Right ventricle myocardium inferior (tissue), 1 donor: ENCODE measurements at regions of chr2 and their contacts with region 1.

Region 1: DNA sequence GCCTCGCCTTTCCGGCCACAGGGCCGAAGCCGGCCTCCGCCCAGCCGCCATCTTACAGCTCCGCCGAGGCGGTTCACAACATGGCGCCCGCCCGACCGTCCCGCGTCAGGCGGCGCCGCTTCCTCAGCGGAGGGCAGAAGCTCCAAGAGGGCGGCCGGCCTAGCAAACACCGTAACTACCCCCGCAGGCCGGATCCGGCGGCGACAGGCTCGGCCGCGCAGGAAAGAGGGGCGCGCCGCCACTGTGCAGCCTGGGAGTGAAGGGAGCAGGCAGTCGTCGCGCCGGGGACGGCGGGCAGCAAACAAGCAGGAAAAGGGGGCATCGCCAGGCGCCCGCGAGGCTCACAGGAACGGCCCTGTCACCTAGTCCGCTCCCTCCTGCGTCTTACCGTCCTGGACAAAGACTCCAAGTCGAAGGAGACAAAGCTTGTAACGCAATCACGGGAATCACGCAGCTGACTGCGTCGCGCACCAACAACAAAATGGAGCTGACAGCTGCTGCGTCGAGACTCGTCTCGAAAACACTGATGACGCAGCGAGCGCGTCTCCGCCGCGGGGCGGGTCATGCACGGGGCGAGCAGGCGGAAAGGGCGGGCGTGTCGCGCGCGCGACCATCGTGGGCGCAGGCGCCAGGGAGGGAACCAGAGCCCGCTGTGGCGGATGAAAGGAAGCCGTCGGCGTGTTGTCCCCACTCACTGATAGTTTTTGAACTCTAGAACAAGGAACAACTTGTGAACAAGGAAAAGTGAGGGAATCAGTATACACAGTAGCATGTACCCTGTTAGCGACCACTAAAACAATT is at the start of gene CLK1:
- DNase-seq: peak; percentile 99
- ATAC-seq: peak; percentile 96
- total RNA-seq, gene CLK1: 46.3 TPM

Region 2: GRCh38 chr2:200713003-200713703 is 151.2 kb before region 1 on chr2:
- intact Hi-C with region 1: loop called (anchors 5 kb)
- DNase-seq: peak; percentile 89
- ATAC-seq: peak; percentile 96

Region 3: DNA sequence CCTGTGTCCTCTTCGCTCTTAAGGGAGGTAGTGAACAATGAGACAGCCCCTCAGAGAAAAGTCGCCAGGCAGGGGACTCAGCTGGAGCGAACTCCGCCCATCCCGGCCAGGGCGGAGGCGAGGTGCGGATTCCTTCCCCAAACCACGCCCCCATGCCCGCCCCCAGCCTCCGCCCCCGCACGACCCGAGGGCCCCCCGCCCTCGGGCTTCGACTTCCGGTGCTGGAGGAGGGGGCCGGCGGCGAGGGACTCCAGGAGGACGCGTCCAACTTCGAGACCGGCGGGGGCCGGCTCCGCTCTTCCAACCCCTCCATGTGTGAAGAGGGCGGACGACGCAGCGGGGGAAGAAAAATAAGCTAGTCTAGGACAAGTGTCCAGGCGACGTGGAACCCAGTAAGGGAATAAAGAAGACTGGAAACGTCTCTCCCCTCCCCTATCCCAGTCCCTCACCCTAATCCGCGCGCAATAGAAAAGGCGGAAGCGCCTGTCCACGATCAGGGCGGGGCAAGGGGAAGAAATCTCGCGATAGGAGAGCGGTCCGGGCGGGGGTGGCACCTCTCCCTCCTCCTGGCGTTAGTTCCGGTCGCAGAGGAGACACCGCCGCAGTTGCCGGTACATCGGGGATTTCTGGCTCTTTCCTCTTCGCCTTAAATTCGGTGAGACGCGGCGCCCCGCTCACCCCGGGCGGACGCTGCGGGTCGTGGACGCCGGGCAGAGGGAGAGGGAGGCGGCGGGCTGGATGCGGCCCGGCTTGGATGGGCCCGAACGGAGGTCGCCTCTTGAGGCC is 52.8 kb before region 1 on chr2 and contains the start of gene BZW1:
- intact Hi-C with region 1: loop called (anchors 5 kb)
- DNase-seq: peak; percentile 97
- ATAC-seq: peak; percentile 95
- total RNA-seq, gene BZW1: 80.4 TPM

Region 4: DNA sequence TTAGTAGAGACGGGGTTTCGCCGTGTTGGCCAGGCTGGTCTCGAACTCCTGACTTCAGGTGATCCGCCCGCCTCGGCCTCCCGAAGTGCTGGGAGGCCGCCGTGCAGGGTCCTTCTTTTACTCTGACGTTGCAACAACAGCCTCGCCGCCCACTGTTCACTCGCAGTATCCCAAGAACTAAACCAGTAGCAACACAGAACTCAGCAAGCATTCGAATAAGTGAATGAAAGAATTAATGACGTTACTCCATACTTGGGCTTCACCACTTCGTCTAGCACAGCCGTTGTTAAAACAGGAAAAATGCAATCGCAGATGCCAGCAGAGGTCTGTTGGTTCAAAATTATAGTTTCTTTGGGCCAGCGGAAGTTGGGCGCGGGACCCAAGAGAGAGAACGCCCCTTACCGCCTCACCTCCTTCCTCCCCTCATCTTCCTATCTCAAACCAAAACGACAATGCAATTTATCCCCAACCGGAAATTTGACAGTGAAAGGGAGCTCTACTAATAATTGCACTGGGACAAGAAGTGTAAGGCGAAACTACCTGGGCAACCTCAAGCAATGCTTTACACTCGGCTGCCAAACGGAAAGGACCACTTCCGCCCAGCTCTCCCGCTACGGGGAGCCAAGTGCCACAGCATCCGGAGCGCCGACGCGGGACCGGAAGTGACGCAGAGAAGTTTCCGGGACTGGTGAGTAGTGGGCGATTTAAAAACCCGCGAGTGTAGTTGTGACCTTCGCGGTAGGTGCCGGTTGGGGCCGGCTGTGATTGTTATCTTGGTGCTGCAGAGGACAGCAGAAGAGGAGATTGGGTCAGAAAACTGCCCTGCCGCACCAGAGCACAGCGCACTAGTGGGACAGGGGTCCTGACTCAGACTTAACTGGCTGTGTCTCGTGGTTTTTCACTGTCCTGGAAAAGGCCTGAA is 24.6 kb after region 1 on chr2 and contains the starts of genes NIF3L1 and PPIL3:
- intact Hi-C with region 1: loop called (anchors 2 kb)
- DNase-seq: peak; percentile 98
- ATAC-seq: peak; percentile 97
- total RNA-seq, gene NIF3L1: 17.1 TPM
- total RNA-seq, gene PPIL3: 21.1 TPM